Right ventricle myocardium inferior (tissue), 1 donor: ENCODE measurements at regions of chr20 and their contacts with region 1.

Region 1: DNA sequence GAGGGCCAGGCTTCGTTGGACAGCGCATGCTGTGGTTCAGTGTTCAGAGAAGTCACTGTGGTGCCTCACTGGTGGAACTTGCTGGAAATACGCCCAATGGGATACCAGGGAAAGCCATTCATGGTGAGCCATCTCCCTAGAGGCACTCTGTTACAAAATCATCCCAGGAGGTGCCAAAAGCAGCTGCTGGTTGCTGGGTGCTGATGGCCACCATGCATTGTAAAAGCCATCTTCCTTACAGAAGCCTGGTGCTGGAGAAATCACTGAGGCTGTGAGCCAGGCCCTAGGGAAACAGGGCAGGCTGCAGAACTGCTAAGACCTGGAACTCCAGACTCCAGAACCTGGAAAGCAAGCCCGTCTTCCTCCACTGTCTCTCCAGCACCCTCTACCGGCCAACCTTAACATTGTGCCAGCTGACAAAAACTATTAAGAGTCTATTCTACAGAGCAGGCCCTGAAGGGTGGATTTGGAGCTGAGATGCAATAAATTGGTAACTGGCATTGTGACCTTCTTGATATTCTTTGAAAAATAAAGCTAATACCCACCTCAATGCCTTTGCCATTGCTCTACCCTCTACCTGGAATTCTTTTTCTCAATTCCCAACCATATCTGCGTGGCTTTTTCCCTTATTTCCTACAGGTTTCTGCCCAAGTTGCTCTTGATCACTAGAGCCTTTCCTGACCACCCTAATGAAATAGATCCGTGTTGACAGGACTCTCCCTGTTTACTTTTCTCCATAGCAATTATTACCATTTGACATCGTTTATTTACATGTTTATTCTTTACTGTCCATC is 18.5 kb downstream of the SNRPB start:
- DNase-seq: no peak
- ATAC-seq: peak; percentile 80

Region 2: GRCh38 chr20:1764136-1765033 is 687.8 kb before region 1 on chr20:
- intact Hi-C with region 1: loop called (anchors 10 kb)
- DNase-seq: peak; percentile 82
- ATAC-seq: peak; percentile 91

Region 3: DNA sequence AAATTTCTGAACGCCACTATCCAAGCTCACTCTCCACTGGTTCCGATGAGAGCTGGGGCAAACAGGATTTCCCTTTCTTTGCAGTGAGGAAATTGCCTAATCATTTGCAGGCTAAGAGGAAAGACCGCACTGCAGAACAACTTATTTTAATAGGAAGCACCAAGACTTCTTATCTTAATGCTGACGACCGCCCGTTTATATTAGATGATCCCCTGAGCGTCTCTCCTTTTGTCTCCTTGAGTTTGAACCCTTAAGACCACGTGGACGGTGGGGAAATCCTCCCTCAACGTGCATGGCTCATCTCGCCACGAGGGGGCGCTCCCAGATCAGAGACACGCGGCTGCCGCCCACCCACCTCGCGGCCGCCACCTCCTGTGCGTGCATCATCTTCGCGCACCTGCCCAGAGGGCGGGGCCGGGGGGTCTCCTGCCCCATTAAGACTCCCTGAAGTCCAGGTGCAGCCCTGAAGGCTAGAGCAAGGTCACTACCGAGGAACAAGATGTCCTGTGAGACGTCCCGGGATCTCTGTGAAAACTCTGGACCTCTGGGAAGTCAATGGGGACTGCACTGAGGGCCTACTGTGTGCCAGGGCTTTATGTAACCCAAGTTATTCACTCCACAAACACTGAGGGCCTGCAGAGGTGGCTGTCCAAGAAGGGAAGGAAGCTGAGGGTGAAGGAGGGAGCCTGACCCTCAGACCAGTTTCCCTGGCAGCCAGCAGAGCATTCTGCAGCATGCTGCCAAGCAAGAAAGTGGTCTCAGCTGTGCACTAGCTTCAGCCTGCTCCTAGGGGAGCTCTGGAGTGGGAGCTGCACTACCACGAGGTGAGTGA is 486.4 kb before region 1 on chr20:
- intact Hi-C with region 1: loop called (anchors 2 kb)
- DNase-seq: peak; percentile 90
- ATAC-seq: peak; percentile 82

Region 4: DNA sequence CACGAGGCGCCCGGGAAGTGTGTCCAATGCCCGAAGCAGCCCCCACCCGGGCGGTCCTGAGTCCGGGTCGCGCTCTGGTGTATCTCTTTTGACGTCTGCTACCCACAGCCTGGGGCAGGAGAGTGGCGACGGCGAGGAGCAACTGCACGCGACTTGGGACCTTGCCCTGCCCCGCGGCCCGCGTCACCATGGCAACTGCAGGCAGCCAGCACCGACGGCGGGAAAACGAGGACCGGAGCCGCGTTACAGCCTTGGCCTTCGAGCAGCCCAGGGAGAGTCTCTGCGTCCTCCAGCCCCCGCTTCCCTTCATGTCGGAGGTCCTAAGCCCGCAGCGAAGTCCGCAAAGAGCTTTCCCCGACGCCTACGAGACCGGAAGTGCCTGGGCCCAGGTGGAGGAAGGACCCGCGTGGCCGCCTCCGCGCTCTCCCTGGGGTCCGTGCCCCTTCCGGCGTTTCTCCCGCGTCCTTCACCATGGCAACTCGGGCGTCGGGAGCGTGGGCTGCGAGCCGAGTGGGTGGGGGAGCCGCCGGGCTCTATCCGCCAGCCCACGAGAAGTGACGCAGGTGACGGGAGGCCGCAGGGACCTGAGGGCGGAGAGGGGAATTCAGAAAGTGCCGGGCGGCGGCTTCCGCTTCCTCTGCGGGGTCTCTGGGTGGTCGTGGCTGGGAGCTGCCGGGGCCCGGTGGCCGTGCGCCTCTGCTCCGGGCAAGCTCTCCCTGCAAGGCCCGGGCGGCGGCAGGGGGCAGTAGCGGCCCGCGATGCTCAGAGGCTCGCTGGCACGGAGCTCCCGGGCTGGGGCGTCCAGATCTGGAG is 245.0 kb before region 1 on chr20:
- intact Hi-C with region 1: loop called (anchors 5 kb)
- DNase-seq: peak; percentile 91
- ATAC-seq: peak; percentile 82

Region 5: DNA sequence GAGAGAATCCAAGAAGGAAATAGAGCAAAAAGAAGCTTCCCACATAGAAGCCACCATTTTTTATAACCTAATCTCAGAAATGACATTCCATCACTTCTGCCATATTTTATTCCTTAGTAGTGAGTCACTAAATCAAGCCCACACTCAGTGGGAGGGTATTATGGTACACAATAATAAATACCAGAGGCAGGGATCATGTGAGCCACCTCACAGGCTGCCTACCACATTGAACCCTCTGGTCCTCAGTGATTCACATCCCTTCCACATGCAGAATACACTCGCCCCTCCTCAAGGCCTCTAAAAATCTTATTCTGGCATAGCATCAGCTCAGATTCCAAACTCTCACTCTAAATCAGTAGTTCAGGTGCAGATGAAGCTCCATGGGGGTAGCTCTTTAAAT is 133.7 kb after region 1 on chr20:
- intact Hi-C with region 1: no loop called
- DNase-seq: no peak
- ATAC-seq: no peak

Region 6: GRCh38 chr20:2922957-2923356 is 470.8 kb after region 1 on chr20:
- intact Hi-C with region 1: no loop called
- DNase-seq: no peak
- ATAC-seq: no peak